Activated T-helper 2 cell treated with anti-CD3 and anti-CD28 coated beads, Interferon-gamma antibody, Interleukin-2, Interleukin-4, amounts not matched to agents 10 μg/mL and 5 μg/mL and 100 μg/mL, durations not matched to agents 14 hours and 24 hours and 36 hours (primary cell): ENCODE measurements at regions of chr14 and their contacts with region 1.

Region 1: DNA sequence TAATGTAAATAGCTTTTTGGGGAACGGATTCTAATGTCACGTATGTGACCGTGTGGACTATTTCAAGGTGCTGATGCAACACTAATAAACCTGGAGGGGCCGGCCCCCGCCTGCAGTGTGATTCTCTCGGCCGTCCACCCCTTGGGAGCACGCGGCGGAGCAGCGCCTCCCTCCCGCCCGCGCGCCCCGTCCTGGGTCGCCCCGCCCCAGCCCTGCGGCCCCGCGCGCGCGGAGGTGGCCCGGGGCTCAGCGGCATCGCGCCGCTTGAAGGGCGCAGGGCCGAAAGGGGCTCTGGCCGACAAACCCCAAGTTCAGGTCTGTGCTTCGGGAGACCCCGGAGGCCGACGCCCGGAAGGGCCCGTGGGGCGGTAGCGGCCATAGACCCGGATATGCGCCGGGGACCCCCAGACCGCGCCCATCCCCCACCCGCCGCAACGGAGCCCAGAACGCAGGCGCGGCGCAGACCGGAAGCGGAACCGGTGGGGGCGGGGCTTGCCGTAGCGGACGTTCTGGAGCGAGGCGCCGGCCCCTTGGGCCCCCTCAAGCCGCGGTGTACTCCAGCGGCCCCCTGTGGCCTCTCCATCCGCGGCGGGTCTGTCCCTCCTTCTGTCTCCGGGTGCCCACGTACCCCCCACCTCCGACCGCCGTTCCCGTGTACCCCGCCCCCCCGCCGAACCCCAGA is at the start of gene TEX22:
- DNase-seq: peak; percentile 84
- H3K4me3 Mint-ChIP-seq: peak within 1 kb of the TSS; percentile 92
- H3K27ac Mint-ChIP-seq: peak within 1 kb of the TSS; percentile 85
- H3K4me1 Mint-ChIP-seq: peaks cover 14% of the 10 kb centered on the region
- H3K27me3 Mint-ChIP-seq: no peaks in the 10 kb centered on the region
- total RNA-seq, gene TEX22: 4.7 and 5.0 TPM in 2 replicates

Region 2: DNA sequence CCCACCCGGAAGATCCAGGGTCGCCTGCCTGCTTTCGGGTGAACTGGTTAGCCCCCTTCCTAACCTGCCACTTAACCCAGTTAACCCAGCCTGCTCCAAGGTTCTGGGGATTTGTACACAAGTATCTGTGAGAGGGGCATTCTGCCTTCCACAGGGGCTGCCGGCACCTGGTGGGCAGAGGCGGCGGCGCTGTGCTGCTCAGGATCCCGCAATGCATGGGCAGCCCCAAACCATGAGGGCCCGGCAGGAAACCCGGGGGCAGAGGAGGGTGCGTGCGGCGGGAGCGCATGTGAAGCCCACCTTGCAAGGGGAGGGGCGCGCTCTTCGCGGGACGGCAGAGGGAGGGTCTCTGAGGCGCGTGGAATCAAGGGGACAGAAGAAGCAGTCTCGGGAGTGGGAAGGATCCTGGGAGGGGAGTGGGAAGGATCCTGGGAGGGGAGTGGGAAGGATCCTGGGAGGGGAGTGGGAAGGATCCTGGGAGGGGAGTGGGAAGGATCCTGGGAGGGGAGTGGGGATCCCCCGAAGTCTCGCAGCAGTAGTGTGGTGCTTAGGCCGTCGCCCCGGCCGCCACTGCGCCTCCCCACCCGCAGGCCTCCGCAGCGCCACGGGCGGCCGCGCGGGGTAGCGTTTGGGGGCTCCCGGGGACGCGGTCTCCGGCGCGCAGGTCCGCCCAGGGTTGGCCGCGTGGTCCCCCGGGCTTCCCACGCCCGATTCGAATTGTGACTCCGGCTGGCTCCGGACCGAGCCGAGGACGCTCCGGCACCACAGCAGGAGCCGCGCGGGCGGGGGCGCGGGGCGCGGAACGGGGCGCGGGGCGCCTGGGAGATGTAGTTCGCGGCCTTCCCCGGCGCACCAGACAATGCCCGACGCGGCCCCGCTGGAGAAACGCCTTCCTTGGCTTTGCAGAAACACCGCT is 16.5 kb after region 1 on chr14:
- intact Hi-C with region 1: loop called (anchors 2 kb)
- DNase-seq: peak; percentile 56
- H3K4me3 Mint-ChIP-seq: peak overlapping the region; percentile 71
- H3K27ac Mint-ChIP-seq: no peak overlapping the region
- H3K4me1 Mint-ChIP-seq: peaks cover 7% of the 10 kb centered on the region
- H3K27me3 Mint-ChIP-seq: peaks cover 22% of the 10 kb centered on the region

Region 3: DNA sequence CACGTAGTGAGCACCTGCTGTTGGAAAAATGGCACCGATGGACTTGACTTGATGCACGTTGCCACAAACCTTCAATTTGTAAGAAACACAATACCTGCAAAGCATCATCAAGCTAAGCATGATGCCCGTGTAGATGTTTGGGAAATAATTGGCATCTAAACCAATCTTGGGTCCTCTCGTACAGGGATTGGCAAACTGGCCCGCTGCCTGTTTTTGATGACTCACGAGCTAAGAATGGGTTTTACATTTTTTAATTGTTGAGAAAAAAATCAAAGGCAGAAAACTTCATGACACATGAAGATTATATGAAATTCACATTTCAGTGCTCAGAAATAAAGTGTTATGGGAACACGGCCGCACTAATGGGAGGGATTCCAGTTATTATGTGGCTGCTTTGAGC is 32.4 kb after region 1 on chr14:
- intact Hi-C with region 1: no loop called
- DNase-seq: no peak
- H3K4me3 Mint-ChIP-seq: no peak overlapping the region
- H3K27ac Mint-ChIP-seq: no peak overlapping the region
- H3K4me1 Mint-ChIP-seq: peaks cover 5% of the 10 kb centered on the region
- H3K27me3 Mint-ChIP-seq: no peaks in the 10 kb centered on the region

Region 4: GRCh38 chr14:105581551-105582341 is 183.6 kb after region 1 on chr14:
- intact Hi-C with region 1: no loop called
- DNase-seq: no peak
- H3K4me3 Mint-ChIP-seq: no peak overlapping the region
- H3K27ac Mint-ChIP-seq: no peak overlapping the region
- H3K4me1 Mint-ChIP-seq: no peaks in the 10 kb centered on the region
- H3K27me3 Mint-ChIP-seq: no peaks in the 10 kb centered on the region